ENCODE measurements at regions of chr5 and their contacts with region 1.

Region 1: DNA sequence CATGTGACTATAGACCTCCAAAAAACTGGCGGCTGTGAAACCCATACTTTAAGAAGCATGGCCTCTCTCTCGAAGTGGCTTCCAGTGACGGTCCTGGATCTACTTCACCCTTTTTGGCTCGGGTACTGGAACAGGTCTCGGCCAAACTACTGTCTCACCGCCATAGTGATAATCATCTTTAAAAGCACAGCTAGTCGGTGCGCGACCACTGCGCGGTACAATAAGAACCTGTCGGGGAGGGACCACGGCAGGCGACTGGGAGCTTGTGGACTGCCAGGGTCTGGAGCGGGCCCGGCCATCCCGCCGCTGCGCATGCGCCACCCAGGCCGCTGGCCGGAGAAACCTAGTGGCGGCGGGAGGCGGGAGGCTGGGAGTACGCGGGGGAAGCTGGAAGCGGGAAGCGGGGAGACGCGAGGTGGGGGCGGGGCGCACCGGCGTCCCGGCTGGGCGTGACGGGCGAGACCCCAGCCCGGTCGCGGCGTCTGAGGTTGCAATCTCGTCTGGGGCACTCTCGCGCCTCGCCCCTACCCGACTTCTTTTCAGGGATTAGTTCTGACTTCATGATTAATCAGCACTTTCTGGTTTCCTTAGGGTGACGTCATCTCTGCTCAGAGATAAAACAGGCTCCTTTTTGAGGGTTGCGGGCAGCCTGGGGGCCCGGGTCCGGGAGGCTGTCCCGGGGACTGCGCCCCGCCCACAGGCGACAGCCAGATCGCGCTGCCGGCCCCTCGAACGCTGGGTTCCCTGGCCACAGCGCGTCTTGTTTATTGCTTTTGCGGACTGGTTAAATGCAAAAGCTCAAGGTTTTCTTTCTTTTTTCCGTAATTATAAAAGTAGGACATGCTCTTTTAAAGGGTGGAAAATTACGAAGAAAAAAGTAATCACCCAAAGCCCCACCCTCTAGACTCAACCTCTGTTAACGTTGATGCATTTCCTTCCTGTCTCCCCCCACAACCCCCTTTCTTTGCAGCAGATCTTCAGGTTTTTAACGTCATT is 266.8 kb downstream of the CWC27 start:
- DNase-seq: peak; percentile 78 to 94 (median 90)
- H3K4me3 ChIP-seq: peak overlapping the region; percentile 86
- H3K4me3 Mint-ChIP-seq: peak overlapping the region; percentile 77 to 86 (median 83)
- H3K27ac ChIP-seq: peak overlapping the region; percentile 95
- H3K27ac Mint-ChIP-seq: peak overlapping the region; percentile 91 to 99 (median 98)
- H3K4me1 ChIP-seq: peaks cover 28% of the 10 kb centered on the region
- H3K4me1 Mint-ChIP-seq: peaks cover 28 to 42% (median 34%) of the 10 kb centered on the region in 3 donors
- H3K27me3 ChIP-seq: no peaks in the 10 kb centered on the region
- H3K27me3 Mint-ChIP-seq: peaks cover 0 to 2% of the 10 kb centered on the region in 2 donors

Region 2: DNA sequence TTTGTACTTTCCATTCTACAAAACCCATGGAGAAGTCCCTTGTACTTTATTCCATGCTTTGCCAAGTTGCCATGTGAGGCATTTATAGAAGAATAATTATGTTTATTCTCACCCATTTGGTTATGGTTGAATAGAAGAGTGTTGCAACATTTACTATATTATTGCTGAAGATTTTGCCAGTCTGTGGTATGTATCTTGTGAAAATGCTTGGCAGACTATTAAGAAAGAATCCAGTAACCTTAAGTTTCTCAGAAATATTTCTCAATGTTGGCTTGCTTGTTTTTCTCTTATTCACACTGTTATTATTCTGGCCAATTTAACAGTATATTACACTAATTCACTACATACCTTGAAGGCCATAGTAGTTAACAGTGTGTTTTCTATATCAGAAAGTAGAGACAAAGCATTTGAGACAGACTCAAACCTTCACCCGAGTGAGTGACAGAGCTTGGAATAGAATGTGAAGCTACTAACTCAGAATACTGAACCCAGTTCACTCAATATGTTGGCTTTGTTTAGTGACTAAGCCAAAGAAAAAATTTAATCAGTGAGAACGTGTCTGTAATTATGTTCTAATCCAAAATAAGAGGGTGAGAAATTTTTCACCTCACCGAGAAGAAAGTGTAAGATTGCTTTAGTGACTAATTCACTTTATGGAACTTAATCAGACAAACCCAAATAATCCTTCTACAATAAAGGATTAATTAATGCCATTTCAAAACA is 82.4 kb before region 1 on chr5:
- CTCF ChIA-PET with region 1: no interaction called
- POLR2A ChIA-PET with region 1: no interaction called
- DNase-seq: no peak
- H3K4me3 ChIP-seq: no peak overlapping the region
- H3K4me3 Mint-ChIP-seq: no peak overlapping the region
- H3K27ac ChIP-seq: no peak overlapping the region
- H3K27ac Mint-ChIP-seq: no peak overlapping the region
- H3K4me1 ChIP-seq: no peaks in the 10 kb centered on the region
- H3K4me1 Mint-ChIP-seq: no peaks in the 10 kb centered on the region
- H3K27me3 ChIP-seq: no peaks in the 10 kb centered on the region
- H3K27me3 Mint-ChIP-seq: no peaks in the 10 kb centered on the region

Region 3: GRCh38 chr5:65102828-65103711 is 67.6 kb after region 1 on chr5:
- CTCF ChIA-PET with region 1: interaction called, 6 read pairs
- POLR2A ChIA-PET with region 1: interaction called, 14 read pairs
- DNase-seq: peak; percentile 14 to 79 (median 67)
- H3K4me3 ChIP-seq: peak overlapping the region; percentile 57
- H3K4me3 Mint-ChIP-seq: peak overlapping the region; percentile 84 to 95 (median 86)
- H3K27ac ChIP-seq: peak overlapping the region; percentile 73
- H3K27ac Mint-ChIP-seq: peak overlapping the region; percentile 51 to 97 (median 94)
- H3K4me1 ChIP-seq: peaks cover 22% of the 10 kb centered on the region
- H3K4me1 Mint-ChIP-seq: peaks cover 30 to 33% (median 32%) of the 10 kb centered on the region in 3 donors
- H3K27me3 ChIP-seq: no peaks in the 10 kb centered on the region
- H3K27me3 Mint-ChIP-seq: no peaks in the 10 kb centered on the region

Measured in CD8-positive, alpha-beta memory T cell (primary cell).